Activated CD8-positive, alpha-beta T cell treated with anti-CD3 and anti-CD28 coated beads for 36 hours (primary cell): ENCODE measurements at regions of chr9 and their contacts with region 1.

Region 1: GRCh38 chr9:16133556-16134227 is 580.8 kb downstream of the CCDC171 start:
- DNase-seq: peak; percentile 42
- ATAC-seq: peak; percentile 74
- H3K4me3 Mint-ChIP-seq: no peak overlapping the region
- H3K27ac Mint-ChIP-seq: peak overlapping the region; percentile 36
- H3K4me1 Mint-ChIP-seq: peaks cover 17% of the 10 kb centered on the region
- H3K27me3 Mint-ChIP-seq: peaks cover 2% of the 10 kb centered on the region
- CTCF ChIP-seq: peak; percentile 69

Region 2: GRCh38 chr9:15873569-15874177 is 260.0 kb before region 1 on chr9:
- CTCF ChIA-PET with region 1: interaction called, 4 read pairs
- POLR2A ChIA-PET with region 1: no interaction called
- intact Hi-C with region 1: loop called (anchors 5 kb)
- DNase-seq: no peak
- ATAC-seq: no peak
- H3K4me3 Mint-ChIP-seq: no peak overlapping the region
- H3K27ac Mint-ChIP-seq: no peak overlapping the region
- H3K4me1 Mint-ChIP-seq: no peaks in the 10 kb centered on the region
- H3K27me3 Mint-ChIP-seq: no peaks in the 10 kb centered on the region
- CTCF ChIP-seq: peak; percentile 65

Region 3: DNA sequence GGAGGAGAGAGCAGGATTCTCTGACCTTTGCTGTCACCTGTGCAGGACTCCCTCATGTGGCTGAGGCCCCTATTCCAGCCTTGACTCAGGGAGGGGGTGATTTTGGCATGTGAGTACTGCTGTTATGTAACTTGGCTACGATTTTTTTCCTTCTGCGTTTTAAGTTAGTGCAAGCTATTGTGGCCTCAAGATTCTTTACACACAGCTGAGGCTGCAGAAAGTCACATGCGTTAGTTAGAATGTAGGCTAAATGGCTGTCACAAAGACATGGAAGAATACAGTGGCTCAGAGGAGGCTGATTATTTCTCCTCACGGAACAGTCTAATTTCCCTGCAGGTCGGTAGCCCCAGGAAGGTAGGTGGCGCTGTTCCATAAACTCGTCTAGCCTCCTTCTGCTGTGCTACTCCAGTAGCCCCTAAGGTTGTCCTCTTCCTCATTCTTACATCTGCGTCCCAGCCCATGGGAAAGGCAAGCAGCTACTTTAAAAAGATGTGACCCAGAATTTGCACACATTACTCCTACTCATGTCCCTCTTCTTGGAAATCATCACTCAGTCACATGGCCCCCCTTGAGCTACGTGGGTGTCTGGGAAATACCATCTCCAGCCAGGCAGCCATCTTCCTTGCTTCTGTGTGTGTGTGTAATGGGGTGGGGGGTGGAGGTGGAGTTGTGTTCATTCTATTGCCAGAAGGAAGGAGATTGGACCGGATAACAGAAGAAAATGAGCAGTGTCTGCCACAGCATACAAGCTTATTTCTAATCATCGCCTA is 94.3 kb before region 1 on chr9:
- CTCF ChIA-PET with region 1: no interaction called
- POLR2A ChIA-PET with region 1: no interaction called
- intact Hi-C with region 1: no loop called
- DNase-seq: peak; percentile 35
- ATAC-seq: peak; percentile 47
- H3K4me3 Mint-ChIP-seq: no peak overlapping the region
- H3K27ac Mint-ChIP-seq: no peak overlapping the region
- H3K4me1 Mint-ChIP-seq: peaks cover 7% of the 10 kb centered on the region
- H3K27me3 Mint-ChIP-seq: no peaks in the 10 kb centered on the region
- CTCF ChIP-seq: no peak

Region 4: GRCh38 chr9:16085167-16085726 is 48.4 kb before region 1 on chr9:
- CTCF ChIA-PET with region 1: no interaction called
- POLR2A ChIA-PET with region 1: no interaction called
- intact Hi-C with region 1: no loop called
- DNase-seq: no peak
- ATAC-seq: no peak
- H3K4me3 Mint-ChIP-seq: no peak overlapping the region
- H3K27ac Mint-ChIP-seq: no peak overlapping the region
- H3K4me1 Mint-ChIP-seq: no peaks in the 10 kb centered on the region
- H3K27me3 Mint-ChIP-seq: peaks cover 3% of the 10 kb centered on the region
- CTCF ChIP-seq: no peak